Activated T-helper 1 cell treated with anti-CD3 and anti-CD28 coated beads, Interleukin-12 subunit alpha, Interleukin-12 subunit beta, Interleukin-2, Interleukin-4 antibody, amounts not matched to agents 30 ng/mL and 10 ng/mL and 1 ng/mL, durations not matched to agents 14 hours and 24 hours and 36 hours (primary cell): ENCODE measurements at regions of chr15 and their contacts with region 1.

Region 1: GRCh38 chr15:90320061-90320884 is 31.8 kb upstream of the ZNF774 start:
- DNase-seq: peak; percentile 60
- H3K4me3 Mint-ChIP-seq: no peak overlapping the region
- H3K27ac Mint-ChIP-seq: no peak overlapping the region
- H3K4me1 Mint-ChIP-seq: peaks cover 9% of the 10 kb centered on the region
- H3K27me3 Mint-ChIP-seq: peaks cover 2% of the 10 kb centered on the region

Region 2: DNA sequence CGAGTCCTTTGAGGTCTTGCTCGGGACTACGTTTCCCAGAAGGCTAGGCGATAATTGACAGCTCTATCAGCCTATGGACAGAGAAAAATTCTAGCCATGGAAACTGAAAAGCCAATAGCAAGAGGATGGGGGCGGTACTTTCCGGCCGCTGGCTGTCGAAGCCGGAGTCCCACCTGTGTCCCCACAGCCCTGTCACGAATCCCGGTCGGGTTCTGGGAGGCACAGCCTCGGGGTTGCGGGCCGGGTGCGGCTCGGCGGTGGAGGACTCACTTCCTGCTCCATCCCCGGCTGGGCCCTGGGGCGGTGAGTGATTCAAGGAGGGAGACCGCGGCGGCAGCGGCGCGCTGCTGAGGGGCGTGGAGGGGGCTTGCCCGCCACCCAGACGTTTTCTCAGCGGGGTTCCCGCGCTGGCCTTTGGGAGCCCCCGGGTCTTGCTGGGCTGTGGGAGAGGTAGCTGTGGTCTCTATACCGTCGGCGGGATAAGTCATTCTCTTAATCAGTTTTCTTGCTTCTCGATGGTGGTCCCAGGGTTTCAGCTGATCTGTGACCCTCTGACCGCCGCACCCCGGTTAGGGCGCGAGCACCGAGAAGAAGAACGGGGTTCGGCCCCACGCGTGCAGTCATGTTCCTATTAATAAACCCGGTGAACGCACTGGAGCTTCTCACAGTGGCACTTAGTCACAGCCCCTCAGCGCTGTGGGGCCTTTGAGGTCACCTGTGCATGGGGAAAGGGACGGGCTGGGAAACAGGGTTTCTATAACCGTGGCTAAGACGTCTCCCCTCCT is 32.0 kb after region 1 on chr15 and contains the start of gene ZNF774:
- intact Hi-C with region 1: loop called (anchors 1 kb)
- DNase-seq: peak; percentile 88
- H3K4me3 Mint-ChIP-seq: peak within 1 kb of the TSS; percentile 90
- H3K27ac Mint-ChIP-seq: peak within 1 kb of the TSS; percentile 85
- H3K4me1 Mint-ChIP-seq: peaks cover 10% of the 10 kb centered on the region
- H3K27me3 Mint-ChIP-seq: no peaks in the 10 kb centered on the region
- total RNA-seq, gene ZNF774: 1.6 and 2.1 TPM in 2 replicates

Region 3: GRCh38 chr15:90362936-90363212 is 42.6 kb after region 1 on chr15:
- intact Hi-C with region 1: loop called (anchors 1 kb)
- DNase-seq: no peak
- H3K4me3 Mint-ChIP-seq: peak overlapping the region; percentile 31
- H3K27ac Mint-ChIP-seq: peak overlapping the region; percentile 50
- H3K4me1 Mint-ChIP-seq: peaks cover 36% of the 10 kb centered on the region
- H3K27me3 Mint-ChIP-seq: no peaks in the 10 kb centered on the region

Region 4: DNA sequence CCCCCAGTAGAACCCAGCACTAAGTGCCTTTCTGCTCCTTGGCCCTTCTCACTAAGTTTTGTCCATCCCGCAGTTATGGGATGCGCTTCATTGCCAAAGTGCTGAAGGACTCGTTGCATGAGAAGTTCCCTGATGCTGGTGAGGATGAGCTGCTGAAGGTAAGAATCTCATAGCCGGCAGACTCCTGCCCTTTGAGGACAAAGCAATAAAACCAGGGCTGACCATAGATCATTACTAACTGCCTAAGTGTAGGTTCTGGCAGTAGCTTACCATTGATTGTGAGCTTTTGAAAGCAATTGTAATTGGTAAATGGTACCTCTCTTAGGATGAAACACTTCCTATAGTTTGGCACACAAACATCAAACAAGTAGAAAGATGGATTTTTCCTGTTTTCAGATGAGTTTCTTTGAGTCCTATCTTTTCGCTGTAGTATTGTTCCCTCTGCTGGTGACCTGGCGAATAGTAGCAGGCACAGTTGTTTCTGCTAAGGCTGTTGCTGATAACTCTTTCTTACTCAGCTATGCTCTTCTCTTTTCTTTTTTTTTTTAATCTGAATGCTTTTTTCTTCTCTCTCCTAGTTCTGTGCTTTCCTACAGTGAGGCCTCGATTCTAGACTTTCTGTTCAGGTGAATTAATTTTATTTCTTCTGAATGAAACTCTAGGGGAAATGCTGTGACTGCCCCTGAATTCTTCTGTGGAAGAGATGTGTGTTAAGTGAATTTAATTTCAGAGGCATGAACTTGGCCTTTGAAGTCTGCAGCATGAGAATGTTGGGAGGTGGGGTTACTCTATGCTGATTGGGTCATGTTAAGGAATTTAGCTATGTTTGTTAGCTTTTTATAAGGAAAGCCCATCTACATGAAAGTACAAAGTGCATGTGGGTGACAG is 162.1 kb after region 1 on chr15:
- intact Hi-C with region 1: loop called (anchors 1 kb)
- DNase-seq: peak; percentile 11
- H3K4me3 Mint-ChIP-seq: no peak overlapping the region
- H3K27ac Mint-ChIP-seq: peak overlapping the region; percentile 13
- H3K4me1 Mint-ChIP-seq: peaks cover 43% of the 10 kb centered on the region
- H3K27me3 Mint-ChIP-seq: no peaks in the 10 kb centered on the region

Region 5: GRCh38 chr15:90603893-90604292 is 283.6 kb after region 1 on chr15:
- intact Hi-C with region 1: loop called (anchors 5 kb)
- DNase-seq: peak; percentile 28
- H3K4me3 Mint-ChIP-seq: no peak overlapping the region
- H3K27ac Mint-ChIP-seq: peak overlapping the region; percentile 67
- H3K4me1 Mint-ChIP-seq: peaks cover 49% of the 10 kb centered on the region
- H3K27me3 Mint-ChIP-seq: no peaks in the 10 kb centered on the region

Region 6: DNA sequence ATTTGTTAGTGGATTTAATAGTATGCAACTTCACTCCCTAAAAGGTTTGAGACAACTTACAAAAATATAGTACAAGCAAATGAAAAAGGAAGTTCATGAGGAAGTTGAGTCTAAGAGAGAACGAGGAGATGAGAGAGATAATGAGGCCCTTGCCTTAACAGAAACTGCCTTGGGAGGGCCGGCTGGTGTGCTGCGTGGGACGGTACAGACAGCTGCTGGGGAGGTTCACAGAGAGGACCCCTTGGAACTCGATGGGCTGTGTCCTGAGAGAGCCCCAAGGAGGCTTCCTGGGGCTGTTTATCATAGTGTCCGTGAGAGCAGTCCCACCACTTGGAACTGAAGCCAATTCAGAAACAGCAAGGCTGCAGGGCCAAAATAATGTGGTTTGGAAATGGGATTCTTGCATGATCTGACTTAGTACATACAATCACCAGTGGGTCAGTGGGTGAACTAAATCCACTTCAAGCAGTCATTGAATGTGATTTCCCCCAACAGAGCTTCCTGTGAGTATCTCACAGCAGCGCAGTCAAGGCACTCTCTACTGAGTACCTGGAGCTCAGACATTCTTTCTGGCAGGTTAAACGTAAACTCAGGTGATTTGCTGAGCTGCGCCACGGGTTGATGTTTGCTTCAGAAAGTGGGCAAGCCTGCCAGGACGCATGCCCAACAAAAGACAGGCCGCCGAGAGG is 300.2 kb after region 1 on chr15:
- intact Hi-C with region 1: loop called (anchors 2 kb)
- DNase-seq: no peak
- H3K4me3 Mint-ChIP-seq: peak overlapping the region; percentile 21
- H3K27ac Mint-ChIP-seq: peak overlapping the region; percentile 83
- H3K4me1 Mint-ChIP-seq: peaks cover 37% of the 10 kb centered on the region
- H3K27me3 Mint-ChIP-seq: no peaks in the 10 kb centered on the region

Region 7: GRCh38 chr15:90691982-90692773 is 371.9 kb after region 1 on chr15:
- intact Hi-C with region 1: loop called (anchors 1 kb)
- DNase-seq: no peak
- H3K4me3 Mint-ChIP-seq: no peak overlapping the region
- H3K27ac Mint-ChIP-seq: no peak overlapping the region
- H3K4me1 Mint-ChIP-seq: peaks cover 52% of the 10 kb centered on the region
- H3K27me3 Mint-ChIP-seq: no peaks in the 10 kb centered on the region